Activated naive CD4-positive, alpha-beta T cell treated with anti-CD3 and anti-CD28 coated beads, Interleukin-2, amount 10 ng/mL, durations not matched to agents 7 days and 5 days (primary cell): ENCODE measurements at regions of chr12 and their contacts with region 1.

Region 1: DNA sequence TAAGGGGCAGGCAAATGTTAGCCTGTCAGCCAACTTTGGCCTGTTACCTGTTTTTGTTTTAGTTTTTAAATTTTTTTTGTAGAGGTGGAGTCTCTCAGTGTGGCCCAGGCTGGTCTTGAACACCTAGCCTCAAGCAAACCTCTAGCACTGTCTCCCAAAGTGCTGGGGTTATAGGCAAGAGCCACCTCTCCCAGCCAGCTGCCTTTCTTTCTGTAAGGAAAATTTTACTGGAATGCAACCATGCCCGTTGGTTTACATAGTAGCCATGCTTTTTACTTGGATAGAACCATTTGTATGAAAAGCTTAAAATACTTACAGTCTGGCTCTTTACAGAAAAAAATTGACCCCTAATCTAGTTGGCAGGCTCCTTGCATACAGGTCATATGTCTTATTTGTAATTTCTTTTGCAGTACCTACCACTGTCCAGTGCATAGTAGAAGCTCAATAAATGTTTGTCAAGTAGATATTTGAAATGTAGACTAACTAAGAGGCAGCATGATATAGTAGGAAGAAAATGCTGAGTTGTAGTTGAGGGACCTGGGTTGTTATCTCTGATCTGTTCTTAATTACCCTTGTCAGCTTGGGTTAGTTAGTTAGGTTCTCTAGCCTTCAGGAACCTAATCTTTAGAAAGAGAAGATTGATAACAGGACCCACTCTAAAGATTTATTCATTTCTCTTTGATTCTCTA is 4.7 kb downstream of the MDM2 start:
- DNase-seq: no peak
- H3K4me3 Mint-ChIP-seq: peak overlapping the region; percentile 49
- H3K27ac Mint-ChIP-seq: peak overlapping the region; percentile 58
- H3K4me1 Mint-ChIP-seq: peaks cover 59% of the 10 kb centered on the region
- H3K27me3 Mint-ChIP-seq: no peaks in the 10 kb centered on the region

Region 2: GRCh38 chr12:68831272-68831671 is 18.6 kb after region 1 on chr12:
- CTCF ChIA-PET with region 1: interaction called, 33 read pairs
- DNase-seq: no peak
- H3K4me3 Mint-ChIP-seq: no peak overlapping the region
- H3K27ac Mint-ChIP-seq: no peak overlapping the region
- H3K4me1 Mint-ChIP-seq: peaks cover 9% of the 10 kb centered on the region
- H3K27me3 Mint-ChIP-seq: no peaks in the 10 kb centered on the region